ENCODE measurements at regions of chr9 and their contacts with region 1.

Region 1: DNA sequence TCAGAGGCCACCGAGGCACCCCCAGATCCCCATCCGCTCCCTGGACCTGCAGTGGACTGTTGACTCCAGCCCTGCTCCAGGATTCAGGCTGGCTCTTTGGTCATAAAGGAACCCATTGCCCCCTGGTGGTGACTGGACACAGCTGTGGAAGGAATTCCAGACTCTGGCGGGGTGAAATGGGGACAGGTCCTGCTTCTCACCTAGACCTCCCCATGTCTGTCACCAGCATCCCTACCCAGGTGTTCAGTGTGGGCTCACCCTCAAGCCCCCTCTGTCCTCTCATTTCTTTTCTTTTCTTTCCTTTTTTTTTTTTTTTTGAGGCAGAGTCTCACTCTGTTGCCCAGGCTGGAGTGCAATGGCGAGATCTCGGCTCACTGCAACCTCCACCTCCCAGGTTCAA is 25.5 kb upstream of the STXBP1 start:
- DNase-seq: peak; percentile 72 to 85
- ATAC-seq: peak; percentile 86 to 92 (median 91)
- H3K4me3 ChIP-seq: no peak overlapping the region
- H3K27ac ChIP-seq: no peak overlapping the region
- H3K4me1 ChIP-seq: no peaks in the 10 kb centered on the region
- H3K27me3 ChIP-seq: no peaks in the 10 kb centered on the region
- CTCF ChIP-seq: peak; percentile 85

Region 2: GRCh38 chr9:127503947-127504782 is 82.4 kb before region 1 on chr9:
- intact Hi-C with region 1: loop called (anchors 1 to 2 kb)
- DNase-seq: peak; percentile 85 to 92
- ATAC-seq: peak; percentile 81 to 90 (median 85)
- H3K4me3 ChIP-seq: no peak overlapping the region
- H3K27ac ChIP-seq: no peak overlapping the region
- H3K4me1 ChIP-seq: no peaks in the 10 kb centered on the region
- H3K27me3 ChIP-seq: no peaks in the 10 kb centered on the region
- CTCF ChIP-seq: peak; percentile 82

Region 3: DNA sequence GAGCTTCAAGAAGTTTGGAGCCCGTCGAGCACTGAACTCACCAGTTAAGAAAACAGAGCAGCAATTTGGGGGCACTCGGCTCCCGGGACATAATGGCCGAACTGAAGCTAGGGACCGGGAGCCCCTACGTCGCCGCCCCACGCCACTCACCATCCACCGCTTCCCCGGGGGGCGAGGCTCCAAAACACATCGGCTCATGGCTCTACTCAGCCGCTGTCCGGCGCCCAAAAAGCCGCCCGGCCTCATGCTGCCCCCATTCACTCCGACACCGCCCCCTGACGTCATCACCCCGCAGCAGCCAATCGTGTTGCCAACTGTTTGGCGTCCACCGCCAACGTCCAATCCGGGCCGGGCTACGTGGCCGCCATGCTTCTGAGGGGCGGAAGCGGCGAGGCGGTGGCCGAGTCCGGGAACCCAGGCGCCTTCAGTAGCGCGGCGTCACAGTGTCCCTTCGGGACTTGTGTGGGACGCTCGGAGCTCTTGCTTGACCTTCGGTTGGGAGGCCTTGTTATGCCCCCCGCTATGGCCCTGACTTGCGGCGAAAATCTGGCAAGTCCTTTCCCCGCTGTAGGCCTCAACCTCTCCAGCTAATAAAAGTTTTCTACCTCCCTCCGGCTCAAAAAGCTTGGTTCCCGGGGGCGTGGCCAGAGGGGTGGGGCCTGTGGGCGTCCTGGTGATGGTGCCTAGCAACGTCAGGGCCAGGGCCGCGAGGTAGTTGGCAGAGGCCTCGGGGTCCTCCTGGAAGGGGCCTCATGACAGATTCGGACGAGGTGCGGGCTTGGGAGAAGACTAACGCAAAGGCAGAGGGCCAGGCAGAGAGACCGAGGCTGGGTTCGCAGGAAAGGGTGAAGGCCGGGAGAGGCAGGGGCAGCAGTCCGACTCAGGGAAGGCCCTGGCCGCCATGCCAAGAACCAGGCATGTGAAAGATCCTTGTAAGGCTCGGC is 129.1 kb after region 1 on chr9 and contains the starts of genes PTRH1 and TTC16:
- intact Hi-C with region 1: loop called in 1 of 2 experiments (anchors 5 kb)
- DNase-seq: peak; percentile 98 to 99
- ATAC-seq: peak; percentile 96 to 98 (median 96)
- H3K4me3 ChIP-seq: peak within 1 kb of the TSS; percentile 85
- H3K27ac ChIP-seq: peak within 1 kb of the TSS; percentile 91
- H3K4me1 ChIP-seq: peaks cover 15% of the 10 kb centered on the region
- H3K27me3 ChIP-seq: no peaks in the 10 kb centered on the region
- CTCF ChIP-seq: no peak
- total RNA-seq, gene PTRH1: 7.9 to 37.7 (median 13.3) TPM
- total RNA-seq, gene TTC16: 0.10 TPM in 1 of 4 donors, not detected in the others

Region 4: GRCh38 chr9:127734747-127735529 is 148.4 kb after region 1 on chr9 and contains the start of gene TOR2A:
- intact Hi-C with region 1: loop called (anchors 1 kb)
- DNase-seq: peak; percentile 99
- ATAC-seq: peak; percentile 95 to 96 (median 95)
- H3K4me3 ChIP-seq: peak within 1 kb of the TSS; percentile 97
- H3K27ac ChIP-seq: peak within 1 kb of the TSS; percentile 99
- H3K4me1 ChIP-seq: peaks cover 13% of the 10 kb centered on the region
- H3K27me3 ChIP-seq: peaks cover 0 to 1% (median 0%) of the 10 kb centered on the region in 3 donors
- CTCF ChIP-seq: peak; percentile 97
- total RNA-seq, gene TOR2A: 2.8 to 6.7 (median 4.0) TPM

Region 5: GRCh38 chr9:127785023-127785932 is 198.7 kb after region 1 on chr9:
- intact Hi-C with region 1: loop called in 1 of 2 experiments (anchors 2 kb)
- DNase-seq: peak; percentile 91 to 94
- ATAC-seq: peak; percentile 72 to 86 (median 80)
- H3K4me3 ChIP-seq: peak overlapping the region; percentile 96
- H3K27ac ChIP-seq: peak overlapping the region; percentile 93
- H3K4me1 ChIP-seq: peaks cover 22% of the 10 kb centered on the region
- H3K27me3 ChIP-seq: no peaks in the 10 kb centered on the region
- CTCF ChIP-seq: peak; percentile 84

Region 6: DNA sequence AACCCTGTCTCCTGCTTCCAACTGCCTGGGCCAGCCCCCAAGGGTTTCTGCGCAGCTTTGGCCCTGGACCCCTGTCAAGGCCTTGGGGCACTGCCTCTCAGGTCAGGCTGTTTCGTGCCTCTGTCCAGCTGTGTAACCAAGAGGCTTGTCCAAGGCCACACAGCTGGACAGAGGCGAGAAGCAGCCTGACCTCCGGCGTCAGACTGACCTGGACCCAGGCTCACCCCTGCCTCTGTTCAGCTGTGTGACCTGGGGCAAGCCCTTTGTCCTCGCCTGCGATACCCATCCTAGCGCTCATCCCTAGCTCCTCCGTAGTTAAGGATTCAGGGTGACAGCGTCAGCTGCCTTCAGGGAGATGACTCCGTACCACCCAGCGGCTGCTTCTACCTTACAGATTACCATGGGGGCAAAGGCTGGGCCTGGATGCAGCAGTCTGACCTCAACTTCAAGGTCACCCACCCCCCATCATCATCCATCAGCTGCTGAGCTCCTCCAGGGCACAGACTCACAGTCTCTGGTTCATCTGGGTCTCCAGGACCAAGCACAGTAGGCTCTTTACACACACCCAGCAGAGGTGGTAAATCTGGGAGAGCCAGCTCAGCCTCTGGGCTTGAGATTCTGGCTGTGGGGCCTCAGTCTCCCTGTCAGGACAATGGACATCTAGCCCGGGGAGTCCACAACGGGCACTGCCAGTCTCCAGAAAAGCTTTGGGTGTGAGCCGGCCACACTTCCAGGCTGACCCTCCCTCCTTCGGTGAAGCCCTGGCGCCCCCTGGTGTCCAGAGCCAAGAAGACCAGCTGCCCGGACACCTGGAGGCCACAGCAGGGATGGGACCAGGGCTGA is 283.0 kb after region 1 on chr9:
- intact Hi-C with region 1: loop called in 1 of 2 experiments (anchors 5 kb)
- DNase-seq: peak; percentile 91 to 96
- ATAC-seq: peak; percentile 76 to 85 (median 79)
- H3K4me3 ChIP-seq: no peak overlapping the region
- H3K27ac ChIP-seq: no peak overlapping the region
- H3K4me1 ChIP-seq: peaks cover 30% of the 10 kb centered on the region
- H3K27me3 ChIP-seq: no peaks in the 10 kb centered on the region
- CTCF ChIP-seq: peak; percentile 78

Region 7: GRCh38 chr9:127916665-127917613 is 330.4 kb after region 1 on chr9 and contains the start of gene ST6GALNAC4:
- intact Hi-C with region 1: loop called (anchors 1 kb)
- DNase-seq: peak; percentile 95 to 97
- ATAC-seq: peak; percentile 91 to 92 (median 92)
- H3K4me3 ChIP-seq: peak within 1 kb of the TSS; percentile 73
- H3K27ac ChIP-seq: peak within 1 kb of the TSS; percentile 81
- H3K4me1 ChIP-seq: peaks cover 37% of the 10 kb centered on the region
- H3K27me3 ChIP-seq: no peaks in the 10 kb centered on the region
- CTCF ChIP-seq: no peak
- total RNA-seq, gene ST6GALNAC4: 8.9 to 52.6 (median 27.3) TPM

Measured in psoas muscle (tissue), 8 donors.